Dendritic cell treated with granulocyte-macrophage colony-stimulating factor and Interleukin-4, amounts not matched to agents 40 ng/mL and 50 ng/mL, for 4 days (primary cell): ENCODE measurements at regions of chr12 and their contacts with region 1.

Region 1: GRCh38 chr12:40312982-40313576 is 88.3 kb downstream of the LRRK2 start:
- H3K4me3 Mint-ChIP-seq: no peak overlapping the region
- H3K27ac Mint-ChIP-seq: no peak overlapping the region
- H3K4me1 Mint-ChIP-seq: peaks cover 16% of the 10 kb centered on the region
- H3K27me3 Mint-ChIP-seq: no peaks in the 10 kb centered on the region

Region 2: GRCh38 chr12:40010899-40011774 is 301.9 kb before region 1 on chr12:
- intact Hi-C with region 1: loop called (anchors 2 kb)
- H3K4me3 Mint-ChIP-seq: peak overlapping the region; percentile 52
- H3K27ac Mint-ChIP-seq: no peak overlapping the region
- H3K4me1 Mint-ChIP-seq: peaks cover 8% of the 10 kb centered on the region
- H3K27me3 Mint-ChIP-seq: no peaks in the 10 kb centered on the region

Region 3: DNA sequence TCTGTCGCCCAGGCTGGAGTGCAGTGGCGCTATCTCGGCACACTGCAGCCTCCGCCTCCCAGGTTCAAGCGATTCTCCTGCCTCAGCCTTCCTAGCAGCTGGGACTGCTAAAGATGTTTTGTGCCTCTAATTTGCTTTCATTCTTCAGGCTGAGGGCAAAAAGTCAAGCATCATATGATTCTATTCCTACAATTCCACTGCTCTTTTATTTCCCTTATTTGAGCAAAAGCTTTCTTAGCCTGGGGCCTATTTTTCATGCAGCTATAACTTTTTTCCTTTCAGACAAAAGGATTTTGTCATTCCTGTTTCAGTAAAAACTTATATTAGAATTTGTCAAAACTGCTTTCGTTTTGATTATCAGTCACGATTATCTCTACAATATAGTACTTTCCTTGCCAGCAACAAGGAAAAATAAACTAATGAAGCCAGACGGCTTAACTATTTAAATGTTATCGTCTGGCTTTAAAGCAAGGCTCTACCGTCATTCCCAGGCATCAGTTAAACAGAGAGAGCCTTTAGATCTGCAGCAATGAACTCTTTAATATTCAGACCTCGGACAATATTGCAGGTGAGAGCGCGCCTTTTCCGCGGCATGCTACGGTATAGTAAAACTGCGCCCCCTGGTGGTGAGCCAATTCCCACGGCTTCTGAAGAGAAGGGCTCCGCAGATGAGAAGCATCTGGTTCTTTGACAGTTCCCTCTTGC is 205.8 kb before region 1 on chr12:
- intact Hi-C with region 1: loop called (anchors 5 kb)
- H3K4me3 Mint-ChIP-seq: peak overlapping the region; percentile 17
- H3K27ac Mint-ChIP-seq: no peak overlapping the region
- H3K4me1 Mint-ChIP-seq: peaks cover 30% of the 10 kb centered on the region
- H3K27me3 Mint-ChIP-seq: peaks cover 35% of the 10 kb centered on the region

Region 4: GRCh38 chr12:40152783-40153383 is 160.2 kb before region 1 on chr12:
- intact Hi-C with region 1: loop called (anchors 2 kb)
- H3K4me3 Mint-ChIP-seq: no peak overlapping the region
- H3K27ac Mint-ChIP-seq: no peak overlapping the region
- H3K4me1 Mint-ChIP-seq: peaks cover 38% of the 10 kb centered on the region
- H3K27me3 Mint-ChIP-seq: peaks cover 30% of the 10 kb centered on the region

Region 5: DNA sequence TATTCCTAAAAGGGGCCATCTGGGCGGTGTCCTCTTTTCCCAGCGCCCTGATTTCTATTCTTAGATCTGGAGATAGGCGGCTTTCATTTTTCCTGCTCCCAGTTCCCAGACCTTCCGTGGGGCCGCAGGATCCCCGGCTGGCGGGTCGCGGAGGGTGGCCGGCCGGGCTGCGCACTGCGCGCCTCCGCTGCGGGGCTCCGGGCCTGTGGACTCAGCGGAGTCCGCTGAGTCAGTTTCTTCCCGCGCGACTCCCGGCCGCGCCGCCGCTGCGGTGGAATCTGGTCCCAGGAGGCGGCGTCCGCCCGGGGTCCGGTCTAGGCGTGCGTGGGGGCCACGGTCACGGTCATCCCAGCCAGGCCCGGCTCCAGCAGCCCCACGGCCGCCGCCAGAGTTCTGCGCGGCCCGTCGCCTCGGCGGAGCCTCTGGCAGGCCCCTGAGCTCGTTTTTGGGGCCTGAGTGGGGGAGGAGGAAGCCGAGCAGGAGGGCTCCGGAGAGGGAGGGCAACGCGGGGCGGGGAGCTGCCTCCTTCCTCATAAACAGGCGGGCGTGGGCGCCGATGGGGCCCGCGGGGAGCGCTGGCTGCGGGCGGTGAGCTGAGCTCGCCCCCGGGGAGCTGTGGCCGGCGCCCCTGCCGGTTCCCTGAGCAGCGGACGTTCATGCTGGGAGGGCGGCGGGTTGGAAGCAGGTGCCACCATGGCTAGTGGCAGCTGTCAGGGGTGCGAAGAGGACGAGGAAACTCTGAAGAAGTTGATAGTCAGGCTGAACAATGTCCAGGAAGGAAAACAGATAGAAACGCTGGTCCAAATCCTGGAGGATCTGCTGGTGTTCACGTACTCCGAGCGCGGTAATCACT is 88.4 kb before region 1 on chr12 and contains the start of gene LRRK2:
- intact Hi-C with region 1: loop called (anchors 5 kb)
- H3K4me3 Mint-ChIP-seq: peak within 1 kb of the TSS; percentile 81
- H3K27ac Mint-ChIP-seq: peak within 1 kb of the TSS; percentile 87
- H3K4me1 Mint-ChIP-seq: peaks cover 55% of the 10 kb centered on the region
- H3K27me3 Mint-ChIP-seq: no peaks in the 10 kb centered on the region

Region 6: DNA sequence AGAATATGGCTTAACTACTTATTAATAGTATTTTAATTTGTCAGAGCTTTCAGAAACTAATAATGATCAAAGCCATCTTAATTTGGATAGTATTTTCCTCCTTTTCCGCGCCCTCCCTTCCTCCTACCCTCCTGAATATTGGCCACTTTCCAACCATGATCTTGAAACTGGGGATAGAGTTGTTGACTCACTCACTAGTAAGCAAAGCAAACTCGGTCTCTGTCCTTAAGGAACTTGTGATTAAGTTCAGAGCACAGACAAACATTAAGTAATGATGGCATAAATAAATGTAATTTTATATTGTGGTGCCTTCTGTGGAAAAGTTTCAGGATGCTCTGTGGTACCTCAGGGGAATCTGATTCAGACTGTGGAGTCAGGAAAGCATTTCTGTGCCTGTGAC is 12.6 kb before region 1 on chr12:
- intact Hi-C with region 1: no loop called
- H3K4me3 Mint-ChIP-seq: no peak overlapping the region
- H3K27ac Mint-ChIP-seq: no peak overlapping the region
- H3K4me1 Mint-ChIP-seq: no peaks in the 10 kb centered on the region
- H3K27me3 Mint-ChIP-seq: no peaks in the 10 kb centered on the region